ENCODE measurements at regions of chr1 and their contacts with region 1.

Region 1: DNA sequence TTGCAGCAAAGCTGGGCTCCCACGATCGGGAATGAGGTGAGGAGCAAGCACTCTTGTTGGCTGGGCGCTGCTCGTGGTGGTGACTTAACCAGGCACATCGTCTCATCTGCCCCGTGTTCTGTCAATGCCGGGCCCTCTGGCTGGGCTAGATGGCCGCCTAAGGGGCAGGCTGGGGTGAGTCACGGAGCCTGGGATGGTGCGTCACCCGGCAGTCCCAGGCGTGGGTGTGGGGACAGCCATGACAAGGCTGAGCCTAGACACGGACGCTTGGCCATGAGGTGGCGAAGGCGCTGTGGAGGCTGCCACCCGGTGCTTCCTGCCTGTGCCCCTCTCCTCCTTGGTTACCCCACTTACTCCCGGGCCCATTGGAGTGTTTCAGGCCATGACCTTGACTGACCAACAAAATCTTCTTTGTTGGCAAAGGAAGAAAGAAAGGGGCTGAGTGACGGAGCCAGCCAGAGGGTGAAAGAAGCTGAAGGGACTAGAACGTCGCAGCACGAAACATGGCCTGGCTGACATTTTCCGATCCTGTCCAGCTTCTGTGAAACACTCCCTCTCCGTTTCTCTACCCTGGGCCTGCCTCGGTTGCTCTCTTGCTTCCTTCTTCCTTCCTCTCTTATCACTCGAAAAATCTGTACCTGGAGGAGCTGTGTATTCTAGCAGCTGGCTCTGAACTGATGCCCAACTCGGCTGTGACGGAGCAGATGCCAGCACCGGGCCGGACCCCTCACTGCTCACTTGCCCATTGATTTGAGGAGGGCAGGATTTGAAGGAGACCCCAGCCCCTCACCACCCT is 596 bp downstream of the CD247 start:
- DNase-seq: peak; percentile 87
- H3K4me3 Mint-ChIP-seq: peak overlapping the region; percentile 99
- H3K27ac Mint-ChIP-seq: peak overlapping the region; percentile 100
- H3K4me1 Mint-ChIP-seq: peaks cover 45% of the 10 kb centered on the region
- H3K27me3 Mint-ChIP-seq: no peaks in the 10 kb centered on the region

Region 2: DNA sequence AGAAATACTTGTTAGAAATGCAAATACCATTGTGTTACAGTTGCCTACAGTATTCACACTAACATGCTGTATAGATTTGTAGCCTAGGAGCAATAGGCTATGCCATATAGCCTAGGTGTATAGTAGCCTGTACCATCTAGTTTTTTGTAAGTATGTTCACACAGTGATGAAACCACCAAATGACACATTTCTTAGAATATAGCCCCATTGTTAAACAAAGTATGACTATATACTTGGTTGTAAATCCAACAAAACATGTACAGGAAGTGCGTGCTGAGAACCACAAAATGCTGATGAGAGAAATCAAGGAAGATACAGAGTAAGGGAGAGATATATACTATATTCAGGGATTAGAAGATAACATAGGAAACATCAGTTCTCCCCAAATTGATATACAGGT is 204.9 kb before region 1 on chr1:
- CTCF ChIA-PET with region 1: no interaction called
- DNase-seq: no peak
- H3K4me3 Mint-ChIP-seq: no peak overlapping the region
- H3K27ac Mint-ChIP-seq: no peak overlapping the region
- H3K4me1 Mint-ChIP-seq: peaks cover 12% of the 10 kb centered on the region
- H3K27me3 Mint-ChIP-seq: peaks cover 4% of the 10 kb centered on the region

Region 3: GRCh38 chr1:167401260-167401873 is 116.4 kb before region 1 on chr1:
- CTCF ChIA-PET with region 1: no interaction called
- DNase-seq: peak; percentile 65
- H3K4me3 Mint-ChIP-seq: no peak overlapping the region
- H3K27ac Mint-ChIP-seq: no peak overlapping the region
- H3K4me1 Mint-ChIP-seq: peaks cover 4% of the 10 kb centered on the region
- H3K27me3 Mint-ChIP-seq: no peaks in the 10 kb centered on the region

Region 4: GRCh38 chr1:167454894-167455785 is 62.6 kb before region 1 on chr1:
- CTCF ChIA-PET with region 1: interaction called, 47 read pairs
- DNase-seq: peak; percentile 90
- H3K4me3 Mint-ChIP-seq: peak overlapping the region; percentile 76
- H3K27ac Mint-ChIP-seq: peak overlapping the region; percentile 69
- H3K4me1 Mint-ChIP-seq: peaks cover 74% of the 10 kb centered on the region
- H3K27me3 Mint-ChIP-seq: no peaks in the 10 kb centered on the region

Region 5: GRCh38 chr1:167499664-167500101 is 18.1 kb before region 1 on chr1:
- CTCF ChIA-PET with region 1: interaction called, 37 read pairs
- DNase-seq: peak; percentile 57
- H3K4me3 Mint-ChIP-seq: peak overlapping the region; percentile 31
- H3K27ac Mint-ChIP-seq: peak overlapping the region; percentile 88
- H3K4me1 Mint-ChIP-seq: peaks cover 99% of the 10 kb centered on the region
- H3K27me3 Mint-ChIP-seq: no peaks in the 10 kb centered on the region

Region 6: GRCh38 chr1:167555971-167556714 is 38.4 kb after region 1 on chr1:
- CTCF ChIA-PET with region 1: no interaction called
- DNase-seq: peak; percentile 85
- H3K4me3 Mint-ChIP-seq: no peak overlapping the region
- H3K27ac Mint-ChIP-seq: no peak overlapping the region
- H3K4me1 Mint-ChIP-seq: peaks cover 24% of the 10 kb centered on the region
- H3K27me3 Mint-ChIP-seq: peaks cover 18% of the 10 kb centered on the region

Measured in activated naive CD4-positive, alpha-beta T cell treated with anti-CD3 and anti-CD28 coated beads, Interleukin-2, amount 10 ng/mL, durations not matched to agents 7 days and 5 days (primary cell).